Heart right ventricle (tissue), 16 donors: ENCODE measurements at regions of chr3 and their contacts with region 1.

Region 1: GRCh38 chr3:143951351-143951971 is 20.2 kb upstream of the DIPK2A start:
- DNase-seq: no peak
- ATAC-seq: no peak
- H3K4me3 ChIP-seq: no peak overlapping the region
- H3K27ac ChIP-seq: no peak overlapping the region
- H3K4me1 ChIP-seq: no peaks in the 10 kb centered on the region
- H3K27me3 ChIP-seq: no peaks in the 10 kb centered on the region
- CTCF ChIP-seq: peak; percentile 28 to 74 (median 62)

Region 2: GRCh38 chr3:143139762-143140161 is 811.7 kb before region 1 on chr3:
- intact Hi-C with region 1: no loop called
- DNase-seq: peak in 1 of 2 donors; percentile 57
- ATAC-seq: peak; percentile 86 to 98 (median 94)
- H3K4me3 ChIP-seq: peak overlapping the region in 1 of 10 donors; percentile 11
- H3K27ac ChIP-seq: peak overlapping the region in 8 of 10 donors; percentile 22 to 70 (median 54)
- H3K4me1 ChIP-seq: peaks cover 0 to 26% (median 9%) of the 10 kb centered on the region in 9 donors
- H3K27me3 ChIP-seq: peaks cover 0 to 10% (median 0%) of the 10 kb centered on the region in 7 donors
- CTCF ChIP-seq: no peak

Region 3: GRCh38 chr3:143769616-143770015 is 181.8 kb before region 1 on chr3:
- intact Hi-C with region 1: loop called in 5 of 10 experiments (anchors 2 to 10 kb)
- DNase-seq: no peak
- ATAC-seq: peak in 1 of 8 donors; percentile 31
- H3K4me3 ChIP-seq: no peak overlapping the region
- H3K27ac ChIP-seq: no peak overlapping the region
- H3K4me1 ChIP-seq: peaks cover 0 to 21% (median 2%) of the 10 kb centered on the region in 9 donors
- H3K27me3 ChIP-seq: no peaks in the 10 kb centered on the region
- CTCF ChIP-seq: no peak

Region 4: GRCh38 chr3:143775459-143775858 is 176.0 kb before region 1 on chr3:
- intact Hi-C with region 1: loop called in 8 of 10 experiments (anchors 2 to 10 kb)
- DNase-seq: no peak
- ATAC-seq: peak in 7 of 8 donors; percentile 51 to 79 (median 71)
- H3K4me3 ChIP-seq: peak overlapping the region in 6 of 10 donors; percentile 6 to 28 (median 21)
- H3K27ac ChIP-seq: no peak overlapping the region
- H3K4me1 ChIP-seq: peaks cover 0 to 7% (median 2%) of the 10 kb centered on the region in 9 donors
- H3K27me3 ChIP-seq: no peaks in the 10 kb centered on the region
- CTCF ChIP-seq: peak; percentile 11 to 71 (median 61)

Region 5: DNA sequence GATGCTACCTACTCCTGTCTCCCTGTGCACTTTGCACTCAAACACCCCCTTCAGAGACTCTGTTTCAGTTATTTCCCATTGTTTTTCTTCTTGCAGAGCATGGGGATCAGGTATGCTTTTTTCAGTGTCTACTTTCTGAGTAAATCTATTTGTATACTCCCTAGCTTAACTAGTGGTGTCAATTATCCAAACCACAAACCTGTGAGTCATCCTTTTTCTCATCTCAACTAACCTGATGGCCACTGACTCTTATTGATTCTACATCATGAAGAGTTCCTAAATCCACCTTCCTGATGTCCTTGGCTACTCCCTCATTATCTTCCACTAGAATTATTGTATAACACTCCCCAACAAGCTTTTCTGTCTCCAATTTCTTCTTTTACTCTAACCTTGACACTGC is 88.2 kb after region 1 on chr3:
- intact Hi-C with region 1: no loop called
- DNase-seq: no peak
- ATAC-seq: no peak
- H3K4me3 ChIP-seq: no peak overlapping the region
- H3K27ac ChIP-seq: no peak overlapping the region
- H3K4me1 ChIP-seq: no peaks in the 10 kb centered on the region
- H3K27me3 ChIP-seq: no peaks in the 10 kb centered on the region
- CTCF ChIP-seq: no peak